ENCODE measurements at regions of chr4 and their contacts with region 1.

Region 1: DNA sequence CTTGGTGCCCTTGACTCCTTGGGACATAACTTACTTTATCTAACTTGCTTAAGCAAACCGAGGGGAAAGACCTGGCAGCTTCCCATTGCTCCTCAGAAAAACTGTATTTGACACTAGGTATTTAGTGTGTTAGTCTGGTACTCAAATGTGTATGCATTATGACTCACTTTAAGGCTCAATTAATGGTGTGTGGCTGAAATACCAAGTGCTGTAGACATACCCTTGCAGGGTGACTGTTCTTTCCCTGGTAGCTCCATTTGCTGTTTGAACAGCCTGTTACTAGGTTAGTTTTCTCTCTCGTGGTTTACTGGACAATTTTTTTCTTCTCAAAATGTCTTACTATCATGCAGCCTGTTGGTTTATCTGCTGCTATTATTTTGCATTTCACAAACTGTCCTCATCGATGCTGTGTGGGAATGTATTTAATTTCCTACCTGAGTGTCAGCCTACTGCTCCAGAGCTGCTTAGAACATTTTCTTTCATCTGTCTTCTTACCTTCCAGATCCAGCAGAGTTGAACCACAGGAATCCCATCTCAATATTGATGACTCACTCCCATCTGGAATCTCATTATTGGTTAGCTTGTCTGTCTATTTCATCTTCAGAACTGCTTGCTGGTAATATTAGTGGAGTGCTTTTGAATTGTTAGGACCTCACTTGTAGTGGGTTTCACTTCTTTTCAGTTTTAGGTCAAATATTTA is 158.0 kb upstream of the FAT1 start:
- DNase-seq: no peak
- H3K4me3 ChIP-seq: no peak overlapping the region
- H3K27ac ChIP-seq: no peak overlapping the region
- H3K4me1 ChIP-seq: peaks cover 11% of the 10 kb centered on the region
- H3K27me3 ChIP-seq: no peaks in the 10 kb centered on the region
- CTCF ChIP-seq: no peak

Region 2: GRCh38 chr4:187618701-187619281 is 737.1 kb after region 1 on chr4:
- CTCF ChIA-PET with region 1: no interaction called
- POLR2A ChIA-PET with region 1: no interaction called
- intact Hi-C with region 1: loop called (anchors 10 kb)
- DNase-seq: peak; percentile 94
- H3K4me3 ChIP-seq: no peak overlapping the region
- H3K27ac ChIP-seq: peak overlapping the region; percentile 86
- H3K4me1 ChIP-seq: peaks cover 47% of the 10 kb centered on the region
- H3K27me3 ChIP-seq: no peaks in the 10 kb centered on the region
- CTCF ChIP-seq: no peak

Measured in A673 (cell line).